K562 (cell line): ENCODE measurements at regions of chr12 and their contacts with region 1.

Region 1: DNA sequence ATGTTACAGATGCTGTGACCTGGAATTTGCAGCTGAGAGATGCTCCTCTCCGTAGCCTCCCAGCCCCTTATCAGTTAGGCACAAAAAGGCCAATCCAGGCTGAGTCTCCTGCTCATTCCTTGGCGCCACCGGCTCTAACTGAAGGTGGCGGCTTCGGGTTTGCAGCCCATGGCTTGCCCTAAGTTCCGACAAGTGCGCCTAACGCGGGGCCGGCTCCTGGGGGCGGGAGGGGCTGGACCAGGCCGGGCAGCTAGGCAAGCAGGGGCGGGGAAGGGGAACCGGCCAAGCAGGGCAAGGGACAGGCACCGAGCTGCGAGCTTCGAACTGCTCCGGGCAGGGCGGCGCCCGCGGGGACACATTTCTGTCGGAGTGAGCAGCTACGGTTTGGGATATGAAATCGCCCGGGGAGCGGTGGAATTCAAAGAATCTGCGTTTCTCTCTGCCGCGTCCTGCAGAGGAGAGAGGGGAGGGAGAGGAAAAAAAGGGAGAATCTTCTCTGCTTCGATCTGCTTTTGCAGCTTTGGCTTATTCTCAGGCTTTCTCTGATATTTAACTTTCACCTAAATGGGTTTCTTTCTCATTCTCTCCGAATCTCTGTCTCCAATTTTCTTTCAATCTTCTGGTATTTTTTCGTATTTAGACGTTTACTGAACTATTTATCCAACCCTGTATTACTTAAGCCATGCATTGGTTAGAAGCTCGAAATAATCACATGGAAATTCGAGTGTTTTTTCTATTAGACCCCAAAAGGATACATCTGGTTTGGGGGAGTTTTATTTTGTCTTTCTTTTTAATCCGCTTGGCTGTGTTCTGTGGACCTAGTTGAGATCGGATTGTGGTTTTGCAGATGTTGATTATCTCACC is 1.6 kb upstream of the HOXC12 start:
- DNase-seq: no peak
- ATAC-seq: no peak
- H3K4me3 ChIP-seq: no peak overlapping the region
- H3K27ac ChIP-seq: no peak overlapping the region
- H3K4me1 ChIP-seq: peaks cover 12 to 45% of the 10 kb centered on the region in 2 experiments; a peak in 4 of 5 replicates
- H3K27me3 ChIP-seq: peaks cover 60 to 76% of the 10 kb centered on the region in 2 experiments
- CTCF ChIP-seq: no peak
- EP300 ChIP-seq: no peak
- POLR2A ChIP-seq: no peak
- RAD21 ChIP-seq: no peak

Region 2: GRCh38 chr12:53766881-53767280 is 186.2 kb before region 1 on chr12:
- CTCF ChIA-PET with region 1: no interaction called
- POLR2A ChIA-PET with region 1: interaction called, 4 read pairs
- in situ Hi-C with region 1: no loop called
- intact Hi-C with region 1: loop called (anchors 1 kb)
- DNase-seq: no peak
- ATAC-seq: no peak
- H3K4me3 ChIP-seq: no peak overlapping the region
- H3K27ac ChIP-seq: no peak overlapping the region
- H3K4me1 ChIP-seq: no peaks in the 10 kb centered on the region
- H3K27me3 ChIP-seq: peaks cover 7 to 17% of the 10 kb centered on the region in 2 experiments; a peak in 4 of 5 replicates
- CTCF ChIP-seq: no peak
- EP300 ChIP-seq: no peak
- POLR2A ChIP-seq: no peak
- RAD21 ChIP-seq: no peak

Region 3: DNA sequence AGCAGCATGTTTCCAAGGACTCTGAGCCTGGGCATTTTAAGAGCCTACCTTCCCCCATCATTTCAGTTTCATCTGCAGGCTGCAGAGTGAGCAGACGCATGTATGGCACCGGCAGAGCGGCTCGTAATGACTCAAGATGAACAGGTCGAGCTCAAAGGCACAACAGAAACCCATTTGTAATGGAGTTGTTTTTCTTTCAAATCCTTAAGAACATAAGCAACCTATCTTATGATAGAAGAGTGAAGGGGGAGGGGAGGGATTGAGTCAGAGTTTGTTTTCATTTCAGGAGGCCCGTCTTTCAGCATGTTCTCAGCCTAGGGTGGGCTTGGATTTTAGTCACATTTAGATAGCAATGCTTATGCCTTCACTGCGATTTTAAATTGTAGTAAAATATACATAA is 146.4 kb before region 1 on chr12:
- CTCF ChIA-PET with region 1: no interaction called
- POLR2A ChIA-PET with region 1: no interaction called
- in situ Hi-C with region 1: no loop called
- intact Hi-C with region 1: loop called (anchors 5 kb)
- DNase-seq: no peak
- ATAC-seq: no peak
- H3K4me3 ChIP-seq: no peak overlapping the region
- H3K27ac ChIP-seq: no peak overlapping the region
- H3K4me1 ChIP-seq: peaks cover 0 to 20% of the 10 kb centered on the region in 2 experiments; a peak in 3 of 5 replicates
- H3K27me3 ChIP-seq: peaks cover 8 to 26% of the 10 kb centered on the region in 2 experiments; a peak in 4 of 5 replicates
- CTCF ChIP-seq: no peak
- EP300 ChIP-seq: no peak
- POLR2A ChIP-seq: no peak
- RAD21 ChIP-seq: no peak